ENCODE measurements at regions of chr16 and their contacts with region 1.

Region 1: GRCh38 chr16:53054670-53055485 is at the start of gene CHD9:
- DNase-seq: peak; percentile 90
- H3K4me3 Mint-ChIP-seq: peak within 1 kb of the TSS; percentile 89
- H3K27ac Mint-ChIP-seq: peak within 1 kb of the TSS; percentile 93
- H3K4me1 Mint-ChIP-seq: peaks cover 29% of the 10 kb centered on the region
- H3K27me3 Mint-ChIP-seq: no peaks in the 10 kb centered on the region
- CTCF ChIP-seq: peak; percentile 98
- total RNA-seq, gene CHD9: 61.8 and 69.5 TPM in 2 replicates

Region 2: GRCh38 chr16:53099318-53100130 is 44.6 kb after region 1 on chr16:
- CTCF ChIA-PET with region 1: interaction called, 15 read pairs
- intact Hi-C with region 1: loop called (anchors 2 kb)
- DNase-seq: peak; percentile 97
- H3K4me3 Mint-ChIP-seq: peak overlapping the region; percentile 72
- H3K27ac Mint-ChIP-seq: peak overlapping the region; percentile 93
- H3K4me1 Mint-ChIP-seq: peaks cover 43% of the 10 kb centered on the region
- H3K27me3 Mint-ChIP-seq: no peaks in the 10 kb centered on the region
- CTCF ChIP-seq: no peak

Region 3: DNA sequence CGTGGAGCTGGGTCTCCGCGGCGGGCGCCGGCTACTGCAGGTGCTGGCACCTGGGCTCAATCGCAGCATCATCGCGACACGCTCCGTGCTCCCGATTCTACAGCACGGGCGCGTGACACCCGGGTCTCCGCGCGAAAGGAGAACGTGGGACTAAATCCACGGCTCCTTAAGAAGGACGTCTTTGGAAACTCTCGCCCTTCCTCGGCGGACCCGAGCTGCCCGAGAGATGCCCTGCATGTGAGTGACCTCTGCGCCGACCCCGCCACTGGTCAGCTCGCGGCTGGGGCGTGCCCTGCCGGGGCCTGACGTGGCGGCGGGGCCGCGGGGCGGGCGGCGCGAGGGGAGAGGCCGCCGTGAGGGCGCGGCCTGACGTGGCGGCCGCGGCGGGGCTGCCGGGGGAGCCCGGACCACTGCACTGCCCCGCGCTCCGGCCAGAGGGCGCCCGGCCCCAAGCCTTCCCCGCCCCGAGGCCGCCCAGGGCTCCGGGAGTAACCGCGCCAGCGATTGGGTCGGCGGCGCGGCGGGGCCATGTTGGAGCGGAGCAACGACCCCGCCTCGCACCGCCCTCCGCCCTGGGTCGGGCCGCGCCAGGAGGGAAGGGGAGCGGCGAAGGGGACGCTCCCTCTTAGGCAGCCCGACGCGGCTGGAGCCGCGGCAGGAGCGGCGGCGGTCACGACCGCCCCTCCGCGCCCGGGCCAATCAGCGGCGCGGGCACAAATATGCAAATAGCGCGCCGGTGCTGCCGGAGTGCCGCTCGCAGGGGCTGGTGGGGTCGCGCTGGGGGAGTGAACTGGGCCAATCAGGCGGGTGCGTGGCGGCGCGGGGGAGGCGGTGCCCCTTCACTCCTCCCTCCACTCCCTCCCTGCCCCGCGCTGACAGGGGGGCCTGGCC is 75.5 kb after region 1 on chr16:
- CTCF ChIA-PET with region 1: interaction called, 16 read pairs
- intact Hi-C with region 1: loop called (anchors 2 kb)
- DNase-seq: peak; percentile 98
- H3K4me3 Mint-ChIP-seq: peak overlapping the region; percentile 100
- H3K27ac Mint-ChIP-seq: peak overlapping the region; percentile 85
- H3K4me1 Mint-ChIP-seq: peaks cover 32% of the 10 kb centered on the region
- H3K27me3 Mint-ChIP-seq: no peaks in the 10 kb centered on the region
- CTCF ChIP-seq: peak; percentile 34

Region 4: DNA sequence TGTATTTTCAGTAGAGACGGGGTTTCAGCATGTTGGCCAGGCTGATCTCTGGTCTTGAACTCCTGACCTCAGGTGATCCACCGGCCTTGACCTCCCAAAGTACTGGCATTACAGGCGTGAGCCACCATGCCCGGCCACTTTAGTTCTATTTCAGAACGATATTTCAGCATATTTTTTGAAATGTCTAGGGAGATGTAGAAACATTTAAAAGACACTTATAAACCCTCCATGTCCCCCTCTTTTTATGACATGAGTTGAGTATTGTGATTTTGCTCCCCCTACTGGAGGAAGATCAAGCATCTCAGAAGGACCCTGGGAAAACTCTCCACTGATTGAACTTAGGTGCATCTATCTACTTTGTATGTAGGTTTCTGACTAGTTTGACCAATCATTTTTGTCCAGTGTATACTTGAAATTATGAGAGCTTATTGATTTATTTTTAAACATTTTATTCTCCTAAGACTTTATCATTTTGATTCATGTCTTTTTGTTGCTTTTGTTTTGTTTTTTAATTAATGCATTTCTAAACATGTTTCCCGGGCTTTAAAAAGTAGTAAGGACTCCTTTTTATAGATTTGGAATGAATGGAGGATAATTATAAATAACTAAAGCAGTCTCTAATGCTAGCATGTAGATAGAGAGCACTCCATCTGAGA is 105.0 kb after region 1 on chr16:
- CTCF ChIA-PET with region 1: interaction called, 3 read pairs
- intact Hi-C with region 1: loop called (anchors 1 kb)
- DNase-seq: peak; percentile 15
- H3K4me3 Mint-ChIP-seq: no peak overlapping the region
- H3K27ac Mint-ChIP-seq: no peak overlapping the region
- H3K4me1 Mint-ChIP-seq: no peaks in the 10 kb centered on the region
- H3K27me3 Mint-ChIP-seq: no peaks in the 10 kb centered on the region
- CTCF ChIP-seq: peak; percentile 60

Region 5: GRCh38 chr16:53207810-53208752 is 153.2 kb after region 1 on chr16:
- CTCF ChIA-PET with region 1: interaction called, 20 read pairs
- intact Hi-C with region 1: loop called (anchors 1 kb)
- DNase-seq: peak; percentile 64
- H3K4me3 Mint-ChIP-seq: peak overlapping the region; percentile 69
- H3K27ac Mint-ChIP-seq: peak overlapping the region; percentile 97
- H3K4me1 Mint-ChIP-seq: peaks cover 20% of the 10 kb centered on the region
- H3K27me3 Mint-ChIP-seq: no peaks in the 10 kb centered on the region
- CTCF ChIP-seq: no peak

Region 6: GRCh38 chr16:53282975-53283946 is 228.4 kb after region 1 on chr16:
- CTCF ChIA-PET with region 1: interaction called, 5 read pairs
- intact Hi-C with region 1: loop called (anchors 1 kb)
- DNase-seq: peak; percentile 33
- H3K4me3 Mint-ChIP-seq: no peak overlapping the region
- H3K27ac Mint-ChIP-seq: no peak overlapping the region
- H3K4me1 Mint-ChIP-seq: no peaks in the 10 kb centered on the region
- H3K27me3 Mint-ChIP-seq: no peaks in the 10 kb centered on the region
- CTCF ChIP-seq: peak; percentile 62

Region 7: GRCh38 chr16:53503270-53503923 is 448.5 kb after region 1 on chr16:
- CTCF ChIA-PET with region 1: no interaction called
- intact Hi-C with region 1: loop called (anchors 5 kb)
- DNase-seq: peak; percentile 100
- H3K4me3 Mint-ChIP-seq: peak overlapping the region; percentile 89
- H3K27ac Mint-ChIP-seq: peak overlapping the region; percentile 75
- H3K4me1 Mint-ChIP-seq: peaks cover 33% of the 10 kb centered on the region
- H3K27me3 Mint-ChIP-seq: no peaks in the 10 kb centered on the region
- CTCF ChIP-seq: no peak